ENCODE measurements at regions of chr3 and their contacts with region 1.

Region 1: DNA sequence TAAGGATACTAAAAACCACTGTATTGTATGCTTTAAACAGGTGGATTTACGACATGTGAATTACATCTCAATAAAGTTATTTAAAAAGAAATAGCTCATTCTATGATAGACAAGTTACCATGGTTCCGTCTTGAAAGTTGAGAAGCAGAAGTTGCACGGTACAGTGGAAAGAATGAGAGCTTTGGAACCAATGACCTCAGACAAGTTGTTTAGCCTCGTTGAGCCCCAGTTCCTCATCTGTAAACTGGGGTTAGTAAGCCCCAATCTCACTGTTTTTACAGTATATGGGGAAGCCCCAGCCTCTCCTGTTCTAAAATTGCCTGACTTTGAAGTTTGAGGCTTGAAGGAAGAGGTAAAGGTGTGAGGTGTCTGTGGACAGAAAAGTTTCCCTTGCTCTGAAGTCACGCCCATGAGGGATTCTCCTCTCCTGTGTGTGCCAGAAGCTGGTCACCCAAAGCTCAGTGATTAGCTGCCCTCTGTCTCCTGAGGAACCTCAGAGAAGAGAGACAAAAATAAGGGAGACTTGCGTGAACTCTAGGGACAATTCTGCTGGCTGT is 10.0 kb downstream of the CRYGS start:
- DNase-seq: peak; percentile 55 to 89 (median 63)
- H3K4me3 ChIP-seq: no peak overlapping the region
- H3K4me3 Mint-ChIP-seq: peak overlapping the region in 6 of 8 donors; percentile 16 to 78 (median 55)
- H3K27ac ChIP-seq: no peak overlapping the region
- H3K27ac Mint-ChIP-seq: peak overlapping the region; percentile 18 to 94 (median 78)
- H3K4me1 ChIP-seq: peaks cover 38% of the 10 kb centered on the region
- H3K4me1 Mint-ChIP-seq: peaks cover 19 to 53% (median 35%) of the 10 kb centered on the region in 4 donors
- H3K27me3 ChIP-seq: no peaks in the 10 kb centered on the region
- H3K27me3 Mint-ChIP-seq: no peaks in the 10 kb centered on the region

Region 2: DNA sequence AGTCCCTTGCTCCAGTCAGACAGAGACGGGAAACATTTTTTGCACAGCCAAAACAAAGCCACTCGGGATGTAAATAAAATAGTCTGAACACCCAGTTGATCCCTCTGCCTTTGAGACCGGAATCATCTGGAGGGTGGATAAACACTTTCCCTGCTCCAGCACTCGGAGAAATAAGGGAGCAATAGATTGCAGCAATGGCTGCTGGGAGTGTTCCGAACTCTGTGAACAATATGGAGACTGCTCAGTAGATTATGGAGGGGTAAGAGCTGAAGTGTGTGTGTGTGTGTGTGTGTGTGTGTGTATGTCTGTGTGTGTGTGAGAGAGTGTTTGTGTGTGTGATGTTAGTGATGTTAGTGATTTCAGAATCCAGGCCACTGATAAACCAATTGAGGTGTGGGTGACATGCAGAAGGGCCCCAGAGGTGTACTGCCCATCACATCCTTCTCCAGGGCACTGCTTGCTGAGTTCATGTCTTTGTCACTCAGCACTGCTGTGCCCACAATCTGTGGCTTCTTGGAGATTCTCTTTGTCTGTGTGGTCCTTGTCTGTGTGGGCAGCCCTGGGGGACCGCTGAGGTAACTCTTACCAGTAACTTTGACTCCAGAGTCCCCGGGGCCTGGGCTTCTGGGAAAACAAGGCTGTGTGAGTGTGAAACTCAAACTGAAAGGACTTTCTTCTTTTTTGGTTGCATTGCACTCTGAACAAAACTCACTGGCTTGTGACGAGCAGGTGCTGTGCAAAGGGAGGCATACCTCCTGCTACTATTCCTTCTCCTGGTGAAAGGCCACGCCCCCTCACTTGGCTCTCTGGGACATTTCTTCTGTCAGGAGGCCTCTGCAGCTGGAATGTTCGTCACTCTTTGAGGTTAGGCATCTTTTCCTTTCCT is 13.0 kb before region 1 on chr3:
- CTCF ChIA-PET with region 1: interaction called, 61 read pairs
- POLR2A ChIA-PET with region 1: interaction called, 26 read pairs
- intact Hi-C with region 1: loop called (anchors 2 kb)
- DNase-seq: no peak
- H3K4me3 ChIP-seq: no peak overlapping the region
- H3K4me3 Mint-ChIP-seq: peak overlapping the region in 2 of 8 donors; percentile 29 to 53
- H3K27ac ChIP-seq: no peak overlapping the region
- H3K27ac Mint-ChIP-seq: peak overlapping the region; percentile 16 to 96 (median 57)
- H3K4me1 ChIP-seq: peaks cover 57% of the 10 kb centered on the region
- H3K4me1 Mint-ChIP-seq: peaks cover 35 to 63% (median 49%) of the 10 kb centered on the region in 4 donors
- H3K27me3 ChIP-seq: no peaks in the 10 kb centered on the region
- H3K27me3 Mint-ChIP-seq: no peaks in the 10 kb centered on the region